Activated naive CD4-positive, alpha-beta T cell treated with anti-CD3 and anti-CD28 coated beads for 36 hours (primary cell): ENCODE measurements at regions of chr10 and their contacts with region 1.

Region 1: GRCh38 chr10:31133628-31134302 is 102.1 kb upstream of the ZNF438 start:
- DNase-seq: peak; percentile 76
- H3K4me3 Mint-ChIP-seq: peak overlapping the region; percentile 68
- H3K27ac Mint-ChIP-seq: no peak overlapping the region
- H3K4me1 Mint-ChIP-seq: peaks cover 37% of the 10 kb centered on the region
- H3K27me3 Mint-ChIP-seq: no peaks in the 10 kb centered on the region

Region 2: GRCh38 chr10:31146491-31147209 is 12.9 kb after region 1 on chr10:
- CTCF ChIA-PET with region 1: interaction called, 3 read pairs
- intact Hi-C with region 1: loop called (anchors 1 kb)
- DNase-seq: peak; percentile 49
- H3K4me3 Mint-ChIP-seq: peak overlapping the region; percentile 6
- H3K27ac Mint-ChIP-seq: no peak overlapping the region
- H3K4me1 Mint-ChIP-seq: peaks cover 19% of the 10 kb centered on the region
- H3K27me3 Mint-ChIP-seq: peaks cover 7% of the 10 kb centered on the region

Region 3: GRCh38 chr10:31171402-31172083 is 37.8 kb after region 1 on chr10:
- CTCF ChIA-PET with region 1: no interaction called
- intact Hi-C with region 1: no loop called
- DNase-seq: no peak
- H3K4me3 Mint-ChIP-seq: no peak overlapping the region
- H3K27ac Mint-ChIP-seq: no peak overlapping the region
- H3K4me1 Mint-ChIP-seq: no peaks in the 10 kb centered on the region
- H3K27me3 Mint-ChIP-seq: no peaks in the 10 kb centered on the region

Region 4: DNA sequence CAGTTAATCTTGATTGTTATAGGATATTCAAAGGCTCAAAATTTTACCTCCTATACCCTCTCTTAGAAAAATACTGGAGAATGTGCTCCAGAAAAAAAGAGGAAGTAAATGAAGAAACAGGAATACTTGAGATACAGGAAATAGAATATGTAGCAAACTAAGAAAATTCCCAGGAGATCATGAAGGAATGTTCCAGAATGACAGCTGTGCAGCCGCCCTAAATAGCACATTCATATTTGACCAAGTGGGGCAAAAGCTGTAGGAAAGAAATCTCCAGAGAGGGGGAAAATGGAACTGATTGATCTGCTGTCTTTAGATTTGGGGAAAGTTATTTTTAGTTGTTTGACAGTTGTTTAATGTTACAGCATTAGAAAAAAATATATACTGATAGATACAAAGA is 139.1 kb after region 1 on chr10:
- CTCF ChIA-PET with region 1: no interaction called
- intact Hi-C with region 1: no loop called
- DNase-seq: no peak
- H3K4me3 Mint-ChIP-seq: no peak overlapping the region
- H3K27ac Mint-ChIP-seq: no peak overlapping the region
- H3K4me1 Mint-ChIP-seq: peaks cover 4% of the 10 kb centered on the region
- H3K27me3 Mint-ChIP-seq: no peaks in the 10 kb centered on the region

Region 5: DNA sequence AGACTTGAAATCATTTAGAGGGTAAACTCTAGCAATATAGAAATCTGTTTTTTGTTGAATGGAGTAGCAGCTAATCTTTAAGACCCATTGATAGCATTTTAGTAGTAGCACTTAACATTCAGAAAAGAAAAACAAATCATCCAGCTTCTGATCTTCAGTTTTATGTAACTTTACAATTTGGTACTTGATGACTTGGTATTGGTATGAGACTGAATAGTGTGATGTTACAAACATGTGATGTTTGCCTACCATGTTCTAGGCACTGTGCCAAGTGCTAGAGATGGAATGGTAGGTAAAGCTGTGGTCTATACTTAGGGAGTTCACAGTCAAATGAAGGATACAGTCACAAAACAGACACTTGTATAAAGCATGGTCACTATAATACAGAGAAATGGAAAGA is 206.6 kb after region 1 on chr10:
- CTCF ChIA-PET with region 1: no interaction called
- intact Hi-C with region 1: no loop called
- DNase-seq: peak; percentile 49
- H3K4me3 Mint-ChIP-seq: no peak overlapping the region
- H3K27ac Mint-ChIP-seq: no peak overlapping the region
- H3K4me1 Mint-ChIP-seq: peaks cover 31% of the 10 kb centered on the region
- H3K27me3 Mint-ChIP-seq: no peaks in the 10 kb centered on the region

Region 6: DNA sequence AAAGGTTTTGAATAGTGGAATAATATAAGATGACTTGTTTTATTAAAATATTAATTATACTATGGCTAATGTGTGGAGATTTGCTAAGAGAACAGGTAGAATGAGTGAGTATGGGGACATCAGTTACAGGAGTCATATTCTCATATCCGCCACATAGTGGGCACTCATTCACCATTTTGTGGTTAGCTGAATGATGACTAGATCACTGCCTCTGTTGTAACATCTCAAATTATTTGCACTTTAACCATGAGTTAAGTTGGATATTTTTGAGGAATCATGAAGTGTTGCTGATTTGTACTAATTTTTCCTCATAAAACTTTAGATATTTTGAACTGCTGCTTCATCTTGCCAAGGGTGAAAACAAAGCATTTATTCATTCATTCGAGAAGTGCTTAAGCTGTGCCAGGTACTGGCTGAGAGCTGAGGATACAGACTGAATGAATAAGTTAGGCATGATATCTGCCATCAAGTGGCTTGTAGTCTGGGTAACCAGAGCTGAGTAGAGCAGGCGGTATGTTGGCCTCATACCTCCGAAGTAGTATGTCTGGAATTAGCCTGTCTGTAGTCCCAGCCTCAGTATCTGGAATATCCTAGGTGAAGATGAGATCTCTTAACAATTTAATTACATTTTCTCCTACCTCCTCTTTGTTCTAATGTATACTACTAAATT is 285.8 kb after region 1 on chr10:
- CTCF ChIA-PET with region 1: no interaction called
- intact Hi-C with region 1: no loop called
- DNase-seq: peak; percentile 8
- H3K4me3 Mint-ChIP-seq: no peak overlapping the region
- H3K27ac Mint-ChIP-seq: no peak overlapping the region
- H3K4me1 Mint-ChIP-seq: peaks cover 51% of the 10 kb centered on the region
- H3K27me3 Mint-ChIP-seq: no peaks in the 10 kb centered on the region